Activated naive CD4-positive, alpha-beta T cell treated with anti-CD3 and anti-CD28 coated beads for 36 hours (primary cell): ENCODE measurements at regions of chr9 and their contacts with region 1.

Region 1: GRCh38 chr9:137176302-137177182 is 4.7 kb upstream of the TMEM210 start:
- DNase-seq: no peak
- H3K4me3 Mint-ChIP-seq: no peak overlapping the region
- H3K27ac Mint-ChIP-seq: no peak overlapping the region
- H3K4me1 Mint-ChIP-seq: peaks cover 8% of the 10 kb centered on the region
- H3K27me3 Mint-ChIP-seq: peaks cover 4% of the 10 kb centered on the region

Region 2: GRCh38 chr9:137114610-137115391 is 61.7 kb before region 1 on chr9 and contains the start of gene DPP7:
- CTCF ChIA-PET with region 1: interaction called, 5 read pairs
- intact Hi-C with region 1: loop called (anchors 5 kb)
- DNase-seq: peak; percentile 74
- H3K4me3 Mint-ChIP-seq: peak within 1 kb of the TSS; percentile 73
- H3K27ac Mint-ChIP-seq: no peak within 1 kb of the TSS
- H3K4me1 Mint-ChIP-seq: peaks cover 14% of the 10 kb centered on the region
- H3K27me3 Mint-ChIP-seq: no peaks in the 10 kb centered on the region
- total RNA-seq, gene DPP7: 162 to 167 TPM

Region 3: GRCh38 chr9:137156567-137157375 is 19.8 kb before region 1 on chr9:
- CTCF ChIA-PET with region 1: no interaction called
- intact Hi-C with region 1: loop called (anchors 2 kb)
- DNase-seq: peak; percentile 49
- H3K4me3 Mint-ChIP-seq: peak overlapping the region; percentile 42
- H3K27ac Mint-ChIP-seq: no peak overlapping the region
- H3K4me1 Mint-ChIP-seq: peaks cover 4% of the 10 kb centered on the region
- H3K27me3 Mint-ChIP-seq: peaks cover 39% of the 10 kb centered on the region